ENCODE measurements at regions of chr3 and their contacts with region 1.

Region 1: DNA sequence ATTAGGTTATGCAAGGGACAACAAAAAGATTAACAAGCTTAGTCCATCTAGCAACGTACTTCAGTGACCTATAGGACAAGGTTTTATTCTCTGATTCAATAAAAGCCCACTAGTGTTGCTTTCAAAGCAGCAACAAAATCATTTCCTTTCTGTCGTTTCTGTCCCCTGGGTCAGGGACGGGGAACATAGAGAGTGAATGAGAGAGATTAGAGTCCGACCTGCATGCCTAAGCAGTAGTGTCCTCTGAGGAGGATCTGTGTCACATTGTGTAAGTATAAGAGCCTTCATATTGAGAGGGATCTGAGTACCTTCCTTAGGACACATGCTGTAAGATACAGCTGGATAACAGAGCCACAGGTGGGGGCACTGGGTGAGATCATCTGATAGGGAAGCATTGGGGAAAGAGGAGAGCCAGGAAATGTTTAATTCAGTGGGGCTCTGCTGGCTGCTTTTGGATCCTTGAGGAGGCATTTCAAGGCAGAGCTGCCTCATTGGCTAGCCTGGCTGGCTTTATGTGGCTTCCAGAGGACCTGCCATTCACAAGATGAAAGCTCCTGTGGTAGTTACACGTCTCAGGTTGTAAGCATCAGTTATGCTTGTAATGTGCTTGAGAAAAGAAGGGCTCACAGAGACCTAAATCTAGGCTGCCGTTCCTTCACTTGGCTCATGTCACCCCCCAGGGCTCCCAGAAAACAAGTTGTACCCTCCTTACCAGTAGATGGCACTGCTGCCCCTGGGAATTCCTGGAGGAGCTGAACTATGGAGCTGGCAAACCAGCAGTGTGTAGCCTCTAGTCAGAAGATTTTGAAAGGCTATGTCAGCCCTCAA is 2.7 kb downstream of the TMEM108 start:
- DNase-seq: peak; percentile 59
- H3K4me3 ChIP-seq: no peak overlapping the region
- H3K27ac ChIP-seq: no peak overlapping the region
- H3K27me3 ChIP-seq: peaks cover 14% of the 10 kb centered on the region
- CTCF ChIP-seq: peak; percentile 89

Region 2: DNA sequence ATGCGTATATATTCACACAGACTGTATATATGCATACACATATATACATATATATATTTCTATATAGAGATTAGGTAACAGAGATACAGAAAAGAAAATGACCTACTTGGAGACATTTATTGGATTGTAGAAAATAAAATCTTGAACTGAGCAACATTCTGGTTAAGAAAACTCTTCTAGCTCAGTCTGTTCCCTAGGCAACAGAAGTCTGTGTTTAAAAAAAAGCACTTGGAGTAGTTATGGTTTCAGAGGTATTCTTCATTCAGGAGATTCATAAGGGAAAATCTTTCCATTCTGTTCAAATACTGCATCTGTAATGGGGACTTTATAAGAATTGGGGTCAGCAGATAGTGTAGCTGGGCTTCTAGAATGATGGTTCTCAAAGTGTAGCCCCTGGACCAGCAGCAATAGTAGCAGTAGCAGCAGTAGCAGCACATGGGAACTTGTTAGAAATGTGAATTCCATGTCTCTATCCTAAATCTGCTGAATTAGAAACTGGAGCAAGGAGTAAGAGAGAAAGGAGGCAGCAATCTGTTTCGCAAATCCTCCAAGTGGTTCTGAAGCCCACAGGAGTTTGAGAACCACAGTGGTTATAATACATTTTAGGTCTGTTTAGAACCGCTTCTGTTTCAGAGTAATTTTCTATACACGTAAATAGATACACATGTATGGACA is 115.5 kb before region 1 on chr3:
- CTCF ChIA-PET with region 1: no interaction called
- POLR2A ChIA-PET with region 1: no interaction called
- DNase-seq: no peak
- H3K4me3 ChIP-seq: no peak overlapping the region
- H3K27ac ChIP-seq: no peak overlapping the region
- H3K27me3 ChIP-seq: no peaks in the 10 kb centered on the region
- CTCF ChIP-seq: no peak

Region 3: DNA sequence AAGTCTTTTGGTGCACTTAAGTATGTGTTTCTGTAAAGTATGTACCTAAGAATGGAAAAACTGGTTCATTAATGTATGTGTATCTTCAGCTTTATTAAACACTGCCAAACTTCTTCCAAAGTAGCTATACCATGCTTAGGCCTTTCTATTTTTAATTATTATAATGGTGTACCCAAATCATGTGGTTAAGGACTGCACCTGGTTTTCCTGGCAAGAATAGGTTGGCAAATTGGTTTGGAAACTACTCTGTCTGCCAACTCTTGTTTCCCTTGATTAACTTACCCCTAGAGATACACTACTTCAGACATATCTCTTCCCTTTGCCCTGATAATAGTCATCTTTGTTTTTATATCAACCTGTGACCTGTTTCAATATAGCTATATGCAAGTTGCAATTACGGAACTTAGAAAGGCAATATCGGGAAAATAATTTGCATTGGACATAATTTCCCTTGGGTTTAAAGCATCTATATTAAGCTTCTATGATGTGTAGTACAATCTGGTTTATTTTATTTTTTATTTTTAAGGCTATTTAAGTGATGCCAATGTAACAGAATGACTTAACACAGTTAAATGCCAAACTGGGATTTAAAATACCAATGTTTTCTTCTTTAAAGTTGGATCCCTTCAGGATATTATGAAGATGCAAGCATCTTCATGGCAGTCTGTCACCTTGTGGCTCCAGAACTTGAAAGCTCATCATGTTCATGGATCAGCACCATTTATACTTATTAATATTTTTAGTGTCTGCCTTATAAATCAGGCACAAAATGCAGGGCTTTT is 43.3 kb before region 1 on chr3:
- CTCF ChIA-PET with region 1: no interaction called
- POLR2A ChIA-PET with region 1: no interaction called
- DNase-seq: no peak
- H3K4me3 ChIP-seq: no peak overlapping the region
- H3K27ac ChIP-seq: no peak overlapping the region
- H3K27me3 ChIP-seq: no peaks in the 10 kb centered on the region
- CTCF ChIP-seq: no peak

Region 4: DNA sequence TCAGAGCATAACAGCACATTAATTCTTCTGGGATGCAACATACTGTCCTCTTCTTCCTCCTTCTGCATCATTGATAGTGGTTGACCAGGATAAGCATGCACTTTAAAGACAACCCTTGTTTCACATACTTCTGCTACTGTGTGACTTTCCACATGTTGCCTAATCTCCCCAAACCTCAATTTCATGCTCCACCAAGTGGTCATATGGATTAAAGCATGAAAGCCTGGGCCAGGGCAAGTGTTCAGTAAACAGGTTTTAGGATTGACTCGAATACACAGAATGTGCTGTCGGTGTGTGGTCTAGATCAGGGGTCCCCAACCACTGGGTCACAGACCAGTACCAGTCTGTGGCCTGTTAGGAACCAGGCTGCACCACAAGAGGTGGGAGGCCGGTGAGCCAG is 336.5 kb after region 1 on chr3:
- CTCF ChIA-PET with region 1: interaction called, 112 read pairs
- POLR2A ChIA-PET with region 1: no interaction called
- DNase-seq: peak; percentile 53
- H3K4me3 ChIP-seq: no peak overlapping the region
- H3K27ac ChIP-seq: no peak overlapping the region
- H3K27me3 ChIP-seq: no peaks in the 10 kb centered on the region
- CTCF ChIP-seq: peak; percentile 75

Region 5: DNA sequence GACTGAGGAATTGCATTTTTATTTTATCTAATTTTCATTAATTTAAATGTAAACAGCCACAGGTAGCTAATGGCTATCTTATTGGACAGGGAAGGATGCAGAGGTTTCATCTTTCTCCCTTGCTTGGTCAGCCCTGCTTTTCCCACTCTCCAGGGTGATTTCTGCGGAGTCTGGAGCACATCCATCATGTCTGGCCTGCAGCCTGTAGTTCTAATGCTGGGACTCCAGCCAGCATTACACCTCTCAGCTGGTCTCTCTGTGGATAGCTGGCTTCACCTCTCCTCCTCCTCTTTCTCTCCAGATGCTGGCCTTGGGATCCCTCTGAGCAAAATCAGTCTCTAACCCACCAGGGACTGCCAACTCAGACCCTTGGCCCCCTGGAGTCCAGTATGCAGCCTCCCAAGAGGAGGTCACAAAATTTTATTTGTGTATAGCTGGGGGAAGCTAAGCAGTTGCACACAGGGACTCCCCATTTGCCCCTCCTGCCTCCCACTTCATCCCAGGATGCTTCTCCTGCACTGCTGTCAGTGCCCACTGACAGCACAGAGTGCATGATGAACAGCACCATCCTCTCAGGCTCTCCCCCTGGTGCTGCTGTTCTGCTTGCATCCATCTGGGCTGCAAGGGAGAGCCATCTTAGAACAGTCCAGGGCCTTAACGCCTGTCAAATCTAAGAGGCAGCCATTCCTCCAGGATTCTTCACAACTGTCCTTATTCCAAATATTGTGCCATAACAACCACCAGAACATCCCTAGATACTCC is 360.6 kb after region 1 on chr3:
- CTCF ChIA-PET with region 1: interaction called, 11 read pairs
- POLR2A ChIA-PET with region 1: no interaction called
- DNase-seq: peak; percentile 43
- H3K4me3 ChIP-seq: no peak overlapping the region
- H3K27ac ChIP-seq: no peak overlapping the region
- H3K27me3 ChIP-seq: no peaks in the 10 kb centered on the region
- CTCF ChIP-seq: no peak

Region 6: DNA sequence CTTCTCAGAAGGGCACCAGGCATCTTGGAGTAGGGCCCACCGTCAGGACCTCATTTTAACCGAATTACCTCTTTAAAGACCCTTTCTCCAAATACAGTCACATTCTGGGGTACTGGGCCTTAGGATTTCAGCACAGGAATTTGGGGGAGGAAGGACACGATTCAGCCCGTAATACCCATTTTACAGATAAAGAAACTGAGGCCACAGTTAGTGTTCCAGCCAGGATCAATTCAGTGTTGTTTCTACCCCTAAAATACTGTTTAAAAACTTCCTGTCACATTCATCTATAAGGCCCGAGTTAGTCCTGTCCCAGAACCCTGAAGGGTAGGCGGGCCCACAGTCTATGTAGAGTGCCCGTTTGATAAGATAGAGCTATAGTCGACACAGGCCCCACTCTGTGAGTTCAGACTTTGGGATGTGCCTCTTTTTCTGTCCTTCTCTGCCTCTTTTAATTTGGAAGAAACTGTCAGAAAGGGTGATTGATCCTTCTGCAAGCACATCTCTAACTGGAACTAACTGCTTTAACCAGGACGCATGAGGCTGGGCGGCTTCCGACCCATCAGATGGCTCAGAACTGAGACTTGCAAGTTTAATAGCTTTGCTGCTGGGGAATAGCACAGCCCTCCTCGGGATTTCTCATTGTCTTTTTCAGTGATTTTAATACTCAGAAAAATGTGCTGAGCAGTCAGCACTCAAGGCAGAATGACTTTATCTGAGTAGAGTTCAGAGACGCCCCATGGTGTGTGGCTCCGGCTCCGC is 378.4 kb after region 1 on chr3:
- CTCF ChIA-PET with region 1: interaction called, 41 read pairs
- POLR2A ChIA-PET with region 1: no interaction called
- DNase-seq: no peak
- H3K4me3 ChIP-seq: no peak overlapping the region
- H3K27ac ChIP-seq: no peak overlapping the region
- H3K27me3 ChIP-seq: no peaks in the 10 kb centered on the region
- CTCF ChIP-seq: no peak

Region 7: GRCh38 chr3:133578548-133579191 is 537.8 kb after region 1 on chr3:
- CTCF ChIA-PET with region 1: interaction called, 14 read pairs
- POLR2A ChIA-PET with region 1: no interaction called
- DNase-seq: no peak
- H3K4me3 ChIP-seq: peak overlapping the region; percentile 11; the same call in 1 of the 2 replicates
- H3K27ac ChIP-seq: no peak overlapping the region
- H3K27me3 ChIP-seq: no peaks in the 10 kb centered on the region
- CTCF ChIP-seq: peak; percentile 76

Measured in AG04450 (cell line).